Pancreas (tissue), 10 donors: ENCODE measurements at regions of chr7 and their contacts with region 1.

Region 1: GRCh38 chr7:29748286-29749108 is 57.8 kb upstream of the WIPF3 start:
- DNase-seq: no peak
- ATAC-seq: peak; percentile 78 to 94 (median 90)
- H3K4me3 ChIP-seq: no peak overlapping the region
- H3K27ac ChIP-seq: no peak overlapping the region
- H3K4me1 ChIP-seq: peaks cover 0 to 2% (median 0%) of the 10 kb centered on the region in 3 donors
- H3K27me3 ChIP-seq: no peaks in the 10 kb centered on the region
- CTCF ChIP-seq: peak in 3 of 4 donors; percentile 22 to 41 (median 24)

Region 2: DNA sequence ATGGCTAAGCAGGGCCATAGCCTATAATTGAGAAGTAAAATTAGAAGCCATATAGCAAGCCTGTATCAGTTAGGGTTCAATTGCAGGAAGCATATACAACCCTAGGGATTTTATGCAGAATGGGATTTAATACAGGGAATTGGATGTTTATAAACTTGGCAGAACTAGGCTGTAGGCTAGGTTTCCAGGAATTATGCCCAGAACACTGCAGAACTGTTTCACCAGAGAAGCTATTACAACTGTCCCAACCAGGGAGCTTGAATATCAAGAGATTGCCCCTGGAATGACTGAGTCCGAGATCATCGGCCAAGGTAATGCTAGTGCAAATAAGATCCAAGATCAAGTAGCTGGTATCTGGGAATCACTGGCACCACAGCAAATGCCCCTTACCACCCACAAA is 120.9 kb before region 1 on chr7:
- intact Hi-C with region 1: loop called in 1 of 3 experiments (anchors 2 kb)
- DNase-seq: no peak
- ATAC-seq: no peak
- H3K4me3 ChIP-seq: no peak overlapping the region
- H3K27ac ChIP-seq: no peak overlapping the region
- H3K4me1 ChIP-seq: no peaks in the 10 kb centered on the region
- H3K27me3 ChIP-seq: no peaks in the 10 kb centered on the region
- CTCF ChIP-seq: no peak

Region 3: GRCh38 chr7:29833929-29834328 is 85.4 kb after region 1 on chr7:
- intact Hi-C with region 1: no loop called
- DNase-seq: no peak
- ATAC-seq: no peak
- H3K4me3 ChIP-seq: no peak overlapping the region
- H3K27ac ChIP-seq: no peak overlapping the region
- H3K4me1 ChIP-seq: no peaks in the 10 kb centered on the region
- H3K27me3 ChIP-seq: no peaks in the 10 kb centered on the region
- CTCF ChIP-seq: no peak

Region 4: DNA sequence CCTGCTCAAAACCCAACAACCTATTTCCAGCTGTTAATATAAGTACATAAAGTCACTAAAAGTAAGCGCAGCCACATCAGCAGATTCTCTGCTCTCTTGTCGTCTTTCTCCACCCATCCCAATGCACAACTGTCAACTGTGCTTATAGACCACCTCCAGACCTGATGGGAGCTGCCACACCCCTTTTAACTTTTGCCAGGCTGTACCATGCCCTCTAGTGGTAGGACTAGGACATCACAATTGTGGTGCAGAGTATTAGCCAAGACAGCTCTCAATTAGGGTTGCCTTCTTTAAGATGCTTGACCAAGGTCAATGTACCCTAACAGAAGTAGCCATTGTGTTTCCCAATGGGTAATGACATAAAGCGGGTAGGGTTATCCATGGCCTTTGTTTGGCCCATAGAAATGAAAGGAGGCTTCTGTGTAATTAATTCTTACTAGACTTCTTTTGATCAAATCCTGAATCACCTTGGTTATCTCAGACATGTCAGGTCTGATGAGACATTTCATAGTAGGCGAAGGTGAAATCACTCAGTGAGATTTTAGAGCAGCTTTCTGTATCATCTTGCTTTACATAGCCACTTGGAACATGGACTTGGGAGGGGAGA is 173.0 kb after region 1 on chr7:
- intact Hi-C with region 1: loop called in 2 of 3 experiments (anchors 10 kb)
- DNase-seq: peak in 1 of 6 donors; percentile 58
- ATAC-seq: peak; percentile 76 to 95 (median 90)
- H3K4me3 ChIP-seq: no peak overlapping the region
- H3K27ac ChIP-seq: no peak overlapping the region
- H3K4me1 ChIP-seq: peaks cover 0 to 3% (median 0%) of the 10 kb centered on the region in 3 donors
- H3K27me3 ChIP-seq: no peaks in the 10 kb centered on the region
- CTCF ChIP-seq: peak; percentile 55 to 85 (median 77)